ENCODE measurements at regions of chr3 and their contacts with region 1.

Region 1: GRCh38 chr3:148880681-148881080 is 15.6 kb downstream of the CPA3 start:
- DNase-seq: peak; percentile 21
- H3K4me3 ChIP-seq: no peak overlapping the region
- H3K27ac ChIP-seq: no peak overlapping the region
- H3K4me1 ChIP-seq: no peaks in the 10 kb centered on the region; a peak in 2 of 4 replicates
- H3K27me3 ChIP-seq: no peaks in the 10 kb centered on the region
- CTCF ChIP-seq: peak; percentile 28; the same call in 1 of the 2 replicates
- EP300 ChIP-seq: no peak
- RAD21 ChIP-seq: peak; percentile 69

Region 2: DNA sequence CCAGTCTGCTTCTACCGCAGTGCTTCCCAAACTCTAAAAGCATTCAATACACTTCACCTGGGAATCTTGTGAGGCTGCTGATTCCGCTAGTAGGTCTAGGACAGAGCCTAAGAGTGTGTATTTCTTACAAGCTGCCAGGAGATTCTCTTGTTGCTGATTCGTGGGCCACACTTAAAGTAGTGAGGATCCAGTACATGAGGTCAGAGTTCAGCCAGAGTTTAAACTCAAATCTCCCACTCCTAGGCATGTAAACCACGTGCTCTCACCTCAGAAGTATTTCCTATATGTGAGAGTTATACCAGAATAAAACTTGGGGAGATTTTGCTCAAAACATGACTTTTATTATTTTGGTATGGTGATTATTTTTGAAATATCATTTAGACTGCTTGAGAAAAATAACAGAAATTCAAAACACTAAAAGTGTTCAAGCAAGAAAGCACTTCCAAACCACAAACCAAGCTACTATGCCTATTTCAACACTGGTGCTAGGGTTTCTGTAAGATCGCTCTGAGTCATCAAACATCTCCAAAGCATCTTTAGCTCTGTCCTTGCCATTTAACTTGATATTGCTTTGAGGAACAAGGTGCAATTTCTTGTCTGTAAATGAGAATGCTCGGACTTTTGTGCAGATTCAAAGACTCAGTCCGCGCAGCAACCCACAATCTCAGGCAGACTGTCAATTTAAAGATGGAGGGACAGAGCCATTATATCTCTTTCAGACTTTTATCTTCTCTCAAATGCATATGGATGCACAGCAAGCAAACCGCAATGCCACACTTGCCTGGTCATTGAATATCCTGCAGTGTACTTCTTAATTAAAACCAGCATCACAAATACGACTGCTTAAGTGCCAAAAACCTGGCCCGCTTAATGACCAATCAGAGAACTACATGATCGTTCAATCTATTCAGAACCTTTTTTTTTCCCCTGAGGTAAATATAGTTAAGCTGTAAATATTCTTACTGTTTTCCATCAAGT is 123.2 kb before region 1 on chr3:
- CTCF ChIA-PET with region 1: no interaction called
- POLR2A ChIA-PET with region 1: no interaction called
- DNase-seq: no peak
- H3K4me3 ChIP-seq: no peak overlapping the region
- H3K27ac ChIP-seq: no peak overlapping the region
- H3K4me1 ChIP-seq: peaks cover 0 to 5% of the 10 kb centered on the region in 2 experiments; a peak in 2 of 4 replicates
- H3K27me3 ChIP-seq: no peaks in the 10 kb centered on the region
- CTCF ChIP-seq: no peak
- EP300 ChIP-seq: no peak
- RAD21 ChIP-seq: no peak

Region 3: DNA sequence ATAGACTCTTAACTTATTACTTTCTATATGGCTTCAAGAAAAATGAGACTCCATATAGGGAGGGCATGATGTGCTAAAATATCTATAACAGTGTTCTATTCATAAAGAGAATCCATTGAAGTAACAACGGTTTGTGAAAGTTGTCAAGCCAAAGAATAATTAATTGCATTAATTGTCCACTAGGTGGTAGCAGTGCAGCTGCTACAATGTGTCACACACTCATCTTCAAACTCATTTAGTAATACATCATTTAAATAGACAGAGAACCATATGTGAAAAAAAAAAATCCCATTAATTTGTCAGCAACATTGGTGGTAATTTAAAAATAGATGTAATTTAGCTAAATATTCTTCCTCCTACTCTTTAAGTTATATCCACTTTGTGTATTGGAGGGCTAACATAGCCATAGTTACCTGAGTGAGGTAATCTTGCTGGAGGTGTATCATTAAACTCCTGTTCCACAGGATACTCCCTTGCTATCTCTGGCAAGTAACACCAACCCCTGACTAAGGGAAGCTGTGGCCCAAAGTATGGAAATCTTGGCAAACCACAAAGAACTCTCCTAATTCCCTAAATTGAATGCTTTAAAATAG is 19.3 kb before region 1 on chr3:
- CTCF ChIA-PET with region 1: interaction called, 14 read pairs
- POLR2A ChIA-PET with region 1: no interaction called
- DNase-seq: peak; percentile 39
- H3K4me3 ChIP-seq: no peak overlapping the region; a peak in 1 of 4 replicates
- H3K27ac ChIP-seq: no peak overlapping the region
- H3K4me1 ChIP-seq: no peaks in the 10 kb centered on the region
- H3K27me3 ChIP-seq: no peaks in the 10 kb centered on the region
- CTCF ChIP-seq: peak; percentile 81
- EP300 ChIP-seq: no peak
- RAD21 ChIP-seq: peak; percentile 80